Heart right ventricle (tissue), 16 donors: ENCODE measurements at regions of chr22 and their contacts with region 1.

Region 1: DNA sequence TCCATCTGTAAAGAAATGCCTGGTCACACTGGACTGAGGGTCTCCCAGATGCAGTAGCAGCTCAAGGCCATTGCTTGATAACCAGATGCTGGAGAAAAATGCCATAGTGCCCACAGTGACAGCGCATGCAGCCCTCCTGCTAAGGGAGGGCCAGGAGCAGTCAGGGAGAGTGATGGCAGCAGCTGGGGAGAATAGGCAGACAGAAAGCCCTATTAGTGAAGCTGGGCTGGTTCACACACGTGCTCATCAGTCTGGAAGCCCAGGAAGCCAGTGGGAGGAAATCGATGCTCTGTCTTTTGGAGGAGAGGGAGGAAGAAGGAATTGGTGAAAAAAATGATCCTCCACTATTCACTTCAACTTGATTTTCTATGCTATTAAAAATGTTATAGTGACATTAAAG is 82.9 kb downstream of the OSBP2 start:
- DNase-seq: no peak
- ATAC-seq: no peak
- H3K4me3 ChIP-seq: no peak overlapping the region
- H3K27ac ChIP-seq: no peak overlapping the region
- H3K4me1 ChIP-seq: no peaks in the 10 kb centered on the region
- H3K27me3 ChIP-seq: no peaks in the 10 kb centered on the region
- CTCF ChIP-seq: no peak

Region 2: DNA sequence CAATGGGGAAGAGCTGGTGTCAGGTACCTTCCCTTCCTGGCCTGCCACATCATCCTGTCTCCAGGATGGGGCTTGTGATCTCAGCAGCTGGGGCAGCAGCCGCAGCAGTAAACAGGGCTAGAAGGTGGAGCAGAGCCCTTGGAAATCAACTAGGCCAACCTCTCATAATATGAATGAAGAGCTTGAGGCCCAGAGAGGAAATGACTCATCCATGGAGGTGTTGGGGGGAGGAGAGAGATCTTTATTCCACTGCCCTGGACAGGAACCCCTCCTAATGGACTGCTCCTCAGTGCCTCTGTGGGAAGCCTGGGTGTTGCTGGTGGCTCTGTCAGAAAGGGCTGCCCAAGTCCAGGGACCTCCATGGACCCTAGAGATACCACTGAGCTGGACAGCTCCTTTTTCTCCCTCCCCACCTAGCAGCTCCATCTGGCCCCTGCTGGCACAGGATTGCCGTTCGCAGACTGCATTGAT is 28.8 kb after region 1 on chr22:
- intact Hi-C with region 1: no loop called
- DNase-seq: no peak
- ATAC-seq: no peak
- H3K4me3 ChIP-seq: no peak overlapping the region
- H3K27ac ChIP-seq: no peak overlapping the region
- H3K4me1 ChIP-seq: peaks cover 4 to 16% (median 13%) of the 10 kb centered on the region in 9 donors
- H3K27me3 ChIP-seq: peaks cover 0 to 30% (median 5%) of the 10 kb centered on the region in 7 donors
- CTCF ChIP-seq: no peak

Region 3: DNA sequence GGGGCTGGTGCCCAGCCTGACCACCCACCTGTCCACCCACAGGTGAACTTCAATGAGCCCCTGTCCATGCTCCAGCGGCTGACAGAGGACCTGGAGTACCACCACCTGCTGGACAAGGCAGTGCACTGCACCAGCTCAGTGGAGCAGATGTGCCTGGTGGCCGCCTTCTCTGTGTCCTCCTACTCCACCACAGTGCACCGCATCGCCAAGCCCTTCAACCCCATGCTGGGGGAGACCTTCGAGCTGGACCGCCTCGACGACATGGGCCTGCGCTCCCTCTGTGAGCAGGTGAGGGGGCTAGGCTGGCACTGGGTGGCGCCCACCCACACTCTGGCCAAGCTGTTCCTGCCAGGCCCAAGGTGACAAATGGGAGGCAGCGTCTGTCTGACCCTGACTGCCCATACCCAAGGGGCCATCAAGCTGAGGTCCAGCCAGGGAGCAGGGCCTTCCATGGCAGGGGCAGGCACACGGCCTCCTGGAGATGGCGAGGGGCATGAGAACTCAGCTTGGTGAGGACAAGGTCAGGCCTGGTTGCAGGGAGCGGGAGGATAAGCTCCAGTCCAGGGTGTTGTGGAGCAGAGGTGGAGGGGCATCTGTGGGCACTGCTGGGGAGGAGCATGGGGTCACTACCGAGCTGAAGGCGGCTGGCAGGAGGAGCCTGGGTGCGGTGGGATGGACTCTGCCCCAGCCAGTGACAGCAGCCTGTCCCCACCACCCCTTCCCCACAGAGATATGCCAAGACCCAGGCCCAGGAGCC is 113.3 kb after region 1 on chr22:
- intact Hi-C with region 1: loop called in 1 of 10 experiments (anchors 10 kb)
- DNase-seq: peak in 1 of 2 donors; percentile 22
- ATAC-seq: peak in 6 of 8 donors; percentile 41 to 65 (median 54)
- H3K4me3 ChIP-seq: no peak overlapping the region
- H3K27ac ChIP-seq: no peak overlapping the region
- H3K4me1 ChIP-seq: no peaks in the 10 kb centered on the region
- H3K27me3 ChIP-seq: no peaks in the 10 kb centered on the region
- CTCF ChIP-seq: peak; percentile 52 to 84 (median 73)

Region 4: DNA sequence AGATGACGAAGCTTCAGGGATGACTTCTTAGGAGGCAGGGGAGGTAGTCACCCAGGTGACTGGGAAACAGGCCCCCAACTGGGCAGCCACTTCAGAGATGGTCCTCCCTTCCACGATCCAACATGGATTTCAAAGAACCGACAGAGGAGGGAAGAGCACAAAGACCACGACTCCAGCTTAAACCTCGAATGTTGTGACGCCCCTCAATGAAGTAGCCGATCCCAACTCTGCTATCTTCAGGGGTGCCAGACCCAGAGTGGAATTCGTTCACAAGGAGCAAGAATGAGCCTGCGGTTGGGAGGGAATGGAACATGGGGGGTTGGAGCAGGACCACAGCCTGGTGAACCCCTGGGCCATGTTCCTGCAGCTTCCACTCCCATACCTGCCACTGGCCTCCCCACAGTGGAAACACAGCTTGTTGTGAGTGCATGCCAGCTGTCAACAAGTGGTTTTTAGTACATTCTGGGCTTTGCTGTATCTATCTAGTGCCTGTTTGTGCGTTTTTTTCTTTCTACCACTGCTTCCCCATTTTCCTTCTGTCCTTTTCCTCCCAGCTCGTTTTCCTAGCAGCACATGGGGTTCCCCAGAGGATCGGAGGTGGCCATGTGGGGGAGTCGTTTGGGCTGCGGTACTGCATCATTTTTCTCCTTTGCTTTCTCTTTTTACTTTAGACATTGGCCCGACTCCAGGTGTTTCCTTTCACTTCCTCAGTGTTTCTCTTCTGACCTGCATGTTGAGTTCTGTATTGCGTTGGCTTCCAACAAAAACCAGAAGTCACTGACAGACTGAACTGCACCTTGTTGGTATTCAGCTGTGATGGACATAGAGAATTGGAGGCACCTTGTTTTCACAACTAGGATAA is 125.1 kb after region 1 on chr22:
- intact Hi-C with region 1: loop called in 2 of 10 experiments (anchors 5 to 10 kb)
- DNase-seq: no peak
- ATAC-seq: no peak
- H3K4me3 ChIP-seq: no peak overlapping the region
- H3K27ac ChIP-seq: no peak overlapping the region
- H3K4me1 ChIP-seq: no peaks in the 10 kb centered on the region
- H3K27me3 ChIP-seq: no peaks in the 10 kb centered on the region
- CTCF ChIP-seq: no peak